ENCODE measurements at regions of chrX and their contacts with region 1.

Region 1: GRCh38 chrX:98646351-98646750 is 1762.6 kb downstream of the RPA4 start:
- DNase-seq: no peak
- H3K4me3 Mint-ChIP-seq: no peak overlapping the region
- H3K27ac Mint-ChIP-seq: no peak overlapping the region
- H3K4me1 Mint-ChIP-seq: no peaks in the 10 kb centered on the region
- H3K27me3 Mint-ChIP-seq: peaks cover 6% of the 10 kb centered on the region
- CTCF ChIP-seq: no peak

Region 2: GRCh38 chrX:97446298-97446882 is 1200.0 kb before region 1 on chrX:
- CTCF ChIA-PET with region 1: no interaction called
- POLR2A ChIA-PET with region 1: no interaction called
- intact Hi-C with region 1: loop called (anchors 10 kb)
- DNase-seq: peak; percentile 6
- H3K4me3 Mint-ChIP-seq: no peak overlapping the region
- H3K27ac Mint-ChIP-seq: no peak overlapping the region
- H3K4me1 Mint-ChIP-seq: no peaks in the 10 kb centered on the region
- H3K27me3 Mint-ChIP-seq: peaks cover 36% of the 10 kb centered on the region
- CTCF ChIP-seq: peak; percentile 13

Region 3: GRCh38 chrX:98480606-98481005 is 165.7 kb before region 1 on chrX:
- CTCF ChIA-PET with region 1: no interaction called
- POLR2A ChIA-PET with region 1: no interaction called
- intact Hi-C with region 1: no loop called
- DNase-seq: peak; percentile 45
- H3K4me3 Mint-ChIP-seq: no peak overlapping the region
- H3K27ac Mint-ChIP-seq: no peak overlapping the region
- H3K4me1 Mint-ChIP-seq: no peaks in the 10 kb centered on the region
- H3K27me3 Mint-ChIP-seq: no peaks in the 10 kb centered on the region
- CTCF ChIP-seq: no peak

Measured in MCF 10A (cell line).